IMR-90 (cell line): ENCODE measurements at regions of chr16 and their contacts with region 1.

Region 1: GRCh38 chr16:24482681-24483202 is 56.6 kb upstream of the RBBP6 start:
- DNase-seq: no peak
- ATAC-seq: no peak
- H3K4me3 ChIP-seq: no peak overlapping the region
- H3K27ac ChIP-seq: no peak overlapping the region
- H3K4me1 ChIP-seq: no peaks in the 10 kb centered on the region
- H3K27me3 ChIP-seq: no peaks in the 10 kb centered on the region; the same call in 1 of the 2 replicates
- CTCF ChIP-seq: no peak
- POLR2A ChIP-seq: no peak
- RAD21 ChIP-seq: no peak

Region 2: GRCh38 chr16:24054741-24055491 is 427.8 kb before region 1 on chr16:
- CTCF ChIA-PET with region 1: no interaction called
- POLR2A ChIA-PET with region 1: no interaction called
- dilution Hi-C with region 1: no loop called
- in situ Hi-C with region 1: no loop called
- intact Hi-C with region 1: no loop called
- DNase-seq: no peak
- ATAC-seq: no peak
- H3K4me3 ChIP-seq: no peak overlapping the region
- H3K27ac ChIP-seq: no peak overlapping the region
- H3K4me1 ChIP-seq: no peaks in the 10 kb centered on the region
- H3K27me3 ChIP-seq: no peaks in the 10 kb centered on the region
- CTCF ChIP-seq: no peak
- POLR2A ChIP-seq: no peak
- RAD21 ChIP-seq: no peak

Region 3: DNA sequence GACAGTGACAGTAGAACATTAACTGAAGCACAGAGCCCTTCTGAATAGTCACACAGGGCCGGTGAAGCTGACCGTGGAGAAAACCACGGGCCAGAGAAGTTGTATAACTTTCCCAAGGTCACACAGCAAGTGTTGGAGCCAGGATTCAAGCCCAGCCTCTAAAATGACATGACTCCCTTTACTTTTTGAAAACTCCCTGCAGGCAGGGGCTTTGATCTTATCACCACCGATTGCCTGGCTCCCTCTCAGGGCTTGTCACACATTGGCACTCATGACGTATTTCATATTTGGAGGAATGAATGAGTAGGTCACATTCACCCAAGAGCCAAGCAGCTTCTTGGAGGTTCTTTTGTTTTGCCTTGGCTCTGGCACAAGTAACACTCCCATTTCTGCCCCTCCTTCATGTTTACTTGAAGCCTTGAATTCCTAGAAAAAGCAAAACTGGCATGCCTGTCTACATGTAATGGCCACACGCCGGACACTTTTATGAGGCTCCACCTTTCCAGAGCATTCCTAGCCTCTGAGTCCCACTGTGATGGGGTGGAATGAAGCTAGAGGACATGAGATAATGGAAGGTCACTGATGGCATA is 43.3 kb after region 1 on chr16:
- CTCF ChIA-PET with region 1: no interaction called
- POLR2A ChIA-PET with region 1: no interaction called
- dilution Hi-C with region 1: no loop called
- in situ Hi-C with region 1: no loop called
- intact Hi-C with region 1: no loop called
- DNase-seq: no peak
- ATAC-seq: peak; percentile 55
- H3K4me3 ChIP-seq: no peak overlapping the region
- H3K27ac ChIP-seq: no peak overlapping the region
- H3K4me1 ChIP-seq: peaks cover 5% of the 10 kb centered on the region; the same call in 1 of the 2 replicates
- H3K27me3 ChIP-seq: peaks cover 2% of the 10 kb centered on the region; the same call in 1 of the 2 replicates
- CTCF ChIP-seq: no peak
- POLR2A ChIP-seq: no peak
- RAD21 ChIP-seq: no peak

Region 4: DNA sequence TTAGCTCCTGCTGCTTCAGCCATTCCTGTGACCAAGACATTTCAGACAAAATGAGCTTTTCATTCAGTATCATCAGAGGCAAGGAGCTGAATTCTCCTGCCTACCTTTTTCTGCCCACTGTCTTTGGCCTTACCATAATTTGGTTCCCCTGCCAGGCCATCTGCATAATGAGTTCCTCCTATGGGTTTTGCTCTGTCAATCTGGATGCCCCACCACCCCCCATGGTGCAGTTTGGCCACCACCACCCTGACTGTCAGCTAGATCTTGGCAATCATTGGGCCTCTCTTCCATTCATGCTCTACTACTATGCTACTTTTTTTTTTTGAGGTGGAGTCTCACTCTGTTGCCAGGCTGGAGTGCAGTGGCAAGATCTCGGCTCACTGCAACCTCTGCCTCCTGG is 944.1 kb after region 1 on chr16:
- CTCF ChIA-PET with region 1: no interaction called
- POLR2A ChIA-PET with region 1: interaction called, 17 read pairs
- dilution Hi-C with region 1: no loop called
- in situ Hi-C with region 1: no loop called
- intact Hi-C with region 1: no loop called
- DNase-seq: no peak
- ATAC-seq: no peak
- H3K4me3 ChIP-seq: no peak overlapping the region
- H3K27ac ChIP-seq: no peak overlapping the region
- H3K4me1 ChIP-seq: no peaks in the 10 kb centered on the region
- H3K27me3 ChIP-seq: no peaks in the 10 kb centered on the region
- CTCF ChIP-seq: no peak
- POLR2A ChIP-seq: no peak
- RAD21 ChIP-seq: no peak